Activated B cell treated with CpG ODN at 0.5 μM for 24 hours (primary cell): ENCODE measurements at regions of chr19 and their contacts with region 1.

Region 1: DNA sequence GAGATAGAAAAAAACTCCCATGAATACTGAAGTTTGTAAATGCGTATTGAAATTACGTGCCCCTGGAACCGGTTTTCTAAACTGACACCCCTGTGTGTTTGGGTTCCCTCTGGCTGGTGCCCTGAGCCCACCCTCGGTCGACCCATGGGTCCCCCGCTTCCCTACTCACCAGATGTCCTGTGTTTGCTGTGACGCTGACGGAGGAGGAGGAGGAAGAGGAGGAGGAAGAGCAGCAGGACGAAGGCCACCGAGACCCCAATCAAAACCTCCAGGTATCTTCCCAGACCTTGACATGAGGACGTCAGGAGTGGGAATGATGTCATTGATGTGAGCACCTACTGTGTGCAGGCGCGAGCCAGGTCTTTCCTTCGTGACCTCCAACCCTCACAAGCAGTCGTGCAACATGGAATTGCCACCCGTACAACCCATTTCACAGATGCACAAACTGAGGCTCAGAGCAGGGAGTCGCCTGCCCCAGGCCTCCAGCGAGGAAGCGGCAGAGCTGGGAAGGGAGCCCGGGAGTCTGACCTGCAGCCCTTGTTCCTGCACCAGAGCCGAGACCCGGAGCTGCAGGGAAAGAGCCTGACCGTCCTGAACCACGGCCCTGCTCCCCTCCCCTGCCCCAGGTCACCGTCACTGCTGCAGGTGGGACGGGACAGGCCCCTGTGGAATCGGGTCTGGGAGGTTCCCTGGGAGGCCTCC is 3.7 kb downstream of the LILRB3 start:
- DNase-seq: no peak
- ATAC-seq: no peak
- H3K4me3 Mint-ChIP-seq: no peak overlapping the region
- H3K27ac Mint-ChIP-seq: no peak overlapping the region
- H3K4me1 Mint-ChIP-seq: peaks cover 2% of the 10 kb centered on the region
- H3K27me3 Mint-ChIP-seq: peaks cover 12% of the 10 kb centered on the region
- CTCF ChIP-seq: no peak

Region 2: DNA sequence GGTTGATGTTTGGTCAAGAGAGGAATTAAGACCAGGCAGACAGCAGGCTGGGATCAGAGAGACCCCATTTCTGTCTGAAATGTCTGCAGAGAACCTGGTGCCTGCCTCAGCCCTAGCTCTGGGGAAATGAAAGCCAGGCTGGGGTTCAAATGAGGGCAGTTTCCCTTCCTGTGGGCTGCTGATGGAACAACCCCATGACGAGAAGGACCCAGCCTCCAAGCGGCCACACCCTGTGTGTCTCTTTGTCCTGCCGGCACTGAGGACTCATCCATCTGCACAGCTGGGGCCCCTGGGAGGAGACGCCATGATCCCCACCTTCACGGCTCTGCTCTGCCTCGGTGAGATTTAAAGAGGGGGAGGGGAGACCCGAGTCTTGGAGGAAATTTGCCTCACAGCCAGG is 443.6 kb after region 1 on chr19 and contains the start of gene LILRB4:
- CTCF ChIA-PET with region 1: no interaction called
- POLR2A ChIA-PET with region 1: no interaction called
- intact Hi-C with region 1: loop called (anchors 5 kb)
- DNase-seq: no peak
- ATAC-seq: peak; percentile 40
- H3K4me3 Mint-ChIP-seq: peak within 1 kb of the TSS; percentile 56
- H3K27ac Mint-ChIP-seq: peak within 1 kb of the TSS; percentile 19
- H3K4me1 Mint-ChIP-seq: peaks cover 32% of the 10 kb centered on the region
- H3K27me3 Mint-ChIP-seq: peaks cover 9% of the 10 kb centered on the region
- CTCF ChIP-seq: no peak
- total RNA-seq, gene LILRB4: 0.76 and 1.4 TPM in 2 replicates